Endothelial cell of umbilical vein (primary cell): ENCODE measurements at regions of chr18 and their contacts with region 1.

Region 1: DNA sequence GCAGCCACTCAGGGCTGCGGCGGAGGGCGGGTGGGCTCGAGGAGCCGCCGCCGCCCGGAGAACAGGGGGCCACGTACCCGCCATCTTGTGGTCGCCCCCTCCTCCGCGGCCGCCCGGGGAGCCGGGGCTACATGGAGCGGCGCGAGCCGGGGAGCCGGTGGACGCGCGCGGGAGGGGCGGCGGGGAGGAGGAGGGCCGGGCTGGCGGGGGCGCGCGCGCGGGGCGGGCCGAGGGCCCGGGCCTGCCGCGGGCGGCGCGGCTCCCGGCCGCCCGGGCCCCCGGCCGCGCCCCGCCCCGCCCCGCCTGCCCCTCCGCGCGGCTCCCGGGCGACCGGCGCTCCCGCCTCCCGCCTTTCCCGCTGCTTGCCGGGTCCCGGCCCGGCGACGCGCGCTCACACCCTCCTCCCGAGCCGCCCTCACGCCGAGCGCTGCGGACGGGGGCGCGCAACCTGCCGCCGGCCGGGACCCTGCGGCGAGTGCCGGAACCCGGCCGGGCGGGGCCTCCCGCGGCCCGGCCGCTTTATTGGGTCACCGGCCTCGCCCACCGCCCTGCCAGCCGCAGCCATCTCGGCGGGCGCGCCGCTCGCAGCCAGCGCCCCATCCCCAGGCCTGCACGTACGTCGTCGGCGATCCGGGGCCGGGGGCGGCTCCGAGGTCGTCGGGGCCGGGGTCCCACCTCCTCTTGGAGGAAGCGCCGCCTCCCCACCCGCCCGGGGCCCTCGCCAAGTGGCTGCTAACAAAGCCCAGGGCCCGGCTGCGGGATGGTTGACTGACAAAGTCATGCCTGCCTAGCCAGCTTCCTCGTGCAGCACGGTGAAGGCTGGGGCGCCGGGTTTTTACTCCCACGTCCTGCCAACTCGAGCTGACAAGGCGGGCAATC is at the start of gene PPP4R1:
- DNase-seq: peak; percentile 79
- H3K4me3 ChIP-seq: peak within 1 kb of the TSS; percentile 93 to 99 (median 98)
- H3K27ac ChIP-seq: peak within 1 kb of the TSS; percentile 86
- H3K4me1 ChIP-seq: peaks cover 51% of the 10 kb centered on the region
- H3K27me3 ChIP-seq: no peaks in the 10 kb centered on the region
- CTCF ChIP-seq: no peak
- POLR2A ChIP-seq: peak; percentile 59
- total RNA-seq, gene PPP4R1: 152 and 168 TPM in 2 replicates

Region 2: DNA sequence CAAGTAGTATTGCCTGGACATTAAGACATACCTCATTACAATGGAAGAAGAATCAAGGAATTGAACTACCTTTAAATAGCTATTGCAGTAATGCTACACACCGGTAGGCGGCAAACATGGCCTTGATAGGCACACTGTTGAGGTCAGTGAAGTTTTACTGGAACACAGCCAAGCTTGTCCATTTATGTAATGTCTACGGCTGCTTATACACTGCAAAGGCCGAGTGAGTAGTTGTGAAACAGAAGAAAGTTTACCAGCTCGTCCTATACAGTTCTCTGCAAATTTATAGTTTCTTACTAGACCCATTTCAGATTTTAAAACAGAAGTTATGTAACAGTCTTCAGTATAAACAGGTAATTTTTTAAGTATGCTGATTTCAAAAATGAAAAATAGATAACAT is 39.1 kb before region 1 on chr18:
- CTCF ChIA-PET with region 1: interaction called, 18 read pairs
- POLR2A ChIA-PET with region 1: no interaction called
- dilution Hi-C with region 1: no loop called
- intact Hi-C with region 1: loop called (anchors 1 kb)
- DNase-seq: peak; percentile 94
- H3K4me3 ChIP-seq: no peak overlapping the region
- H3K27ac ChIP-seq: no peak overlapping the region
- H3K4me1 ChIP-seq: peaks cover 28% of the 10 kb centered on the region
- H3K27me3 ChIP-seq: no peaks in the 10 kb centered on the region
- CTCF ChIP-seq: peak; percentile 80 to 84
- POLR2A ChIP-seq: no peak

Region 3: GRCh38 chr18:9661564-9661963 is 46.9 kb after region 1 on chr18:
- CTCF ChIA-PET with region 1: interaction called, 30 read pairs
- POLR2A ChIA-PET with region 1: no interaction called
- dilution Hi-C with region 1: no loop called
- intact Hi-C with region 1: no loop called
- DNase-seq: no peak
- H3K4me3 ChIP-seq: no peak overlapping the region
- H3K27ac ChIP-seq: no peak overlapping the region
- H3K4me1 ChIP-seq: no peaks in the 10 kb centered on the region
- H3K27me3 ChIP-seq: no peaks in the 10 kb centered on the region
- CTCF ChIP-seq: peak in 1 of 2 donors; percentile 9
- POLR2A ChIP-seq: no peak

Region 4: GRCh38 chr18:9690418-9691188 is 76.0 kb after region 1 on chr18:
- CTCF ChIA-PET with region 1: no interaction called
- POLR2A ChIA-PET with region 1: no interaction called
- dilution Hi-C with region 1: no loop called
- intact Hi-C with region 1: no loop called
- DNase-seq: no peak
- H3K4me3 ChIP-seq: no peak overlapping the region
- H3K27ac ChIP-seq: no peak overlapping the region
- H3K4me1 ChIP-seq: no peaks in the 10 kb centered on the region
- H3K27me3 ChIP-seq: no peaks in the 10 kb centered on the region
- CTCF ChIP-seq: no peak
- POLR2A ChIP-seq: no peak

Region 5: DNA sequence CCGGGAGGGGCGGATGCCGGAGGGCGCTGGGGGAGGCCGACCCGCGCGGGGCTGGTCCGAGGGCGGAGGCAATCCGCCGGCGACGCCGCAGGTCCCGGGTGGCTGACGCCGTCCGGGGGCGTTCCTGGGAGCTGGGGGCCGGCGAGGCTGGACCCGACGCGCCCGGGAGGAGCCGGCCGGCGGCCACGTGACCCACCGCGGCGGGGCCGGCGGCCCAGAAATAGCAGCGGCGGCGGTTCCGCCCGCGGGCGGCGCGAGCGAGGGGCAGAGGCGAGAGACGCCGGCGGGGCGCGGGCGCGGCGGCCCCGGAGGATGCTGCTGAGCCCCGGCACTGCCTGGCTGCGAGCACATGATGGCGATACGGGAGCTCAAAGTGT is 93.4 kb after region 1 on chr18 and contains the start of gene RAB31:
- CTCF ChIA-PET with region 1: interaction called, 11 read pairs
- POLR2A ChIA-PET with region 1: no interaction called
- dilution Hi-C with region 1: no loop called
- intact Hi-C with region 1: no loop called
- DNase-seq: peak; percentile 67
- H3K4me3 ChIP-seq: peak within 1 kb of the TSS; percentile 79 to 98 (median 91)
- H3K27ac ChIP-seq: peak within 1 kb of the TSS; percentile 70
- H3K4me1 ChIP-seq: peaks cover 23% of the 10 kb centered on the region
- H3K27me3 ChIP-seq: no peaks in the 10 kb centered on the region
- CTCF ChIP-seq: no peak
- POLR2A ChIP-seq: peak; percentile 52
- total RNA-seq, gene RAB31: 27.9 and 30.5 TPM in 2 replicates

Region 6: GRCh38 chr18:9771261-9771976 is 156.8 kb after region 1 on chr18:
- CTCF ChIA-PET with region 1: no interaction called
- POLR2A ChIA-PET with region 1: no interaction called
- dilution Hi-C with region 1: no loop called
- intact Hi-C with region 1: loop called (anchors 1 kb)
- DNase-seq: peak; percentile 81
- H3K4me3 ChIP-seq: no peak overlapping the region
- H3K27ac ChIP-seq: peak overlapping the region; percentile 14
- H3K4me1 ChIP-seq: peaks cover 4% of the 10 kb centered on the region
- H3K27me3 ChIP-seq: no peaks in the 10 kb centered on the region
- CTCF ChIP-seq: peak; percentile 97 to 99
- POLR2A ChIP-seq: no peak

Region 7: DNA sequence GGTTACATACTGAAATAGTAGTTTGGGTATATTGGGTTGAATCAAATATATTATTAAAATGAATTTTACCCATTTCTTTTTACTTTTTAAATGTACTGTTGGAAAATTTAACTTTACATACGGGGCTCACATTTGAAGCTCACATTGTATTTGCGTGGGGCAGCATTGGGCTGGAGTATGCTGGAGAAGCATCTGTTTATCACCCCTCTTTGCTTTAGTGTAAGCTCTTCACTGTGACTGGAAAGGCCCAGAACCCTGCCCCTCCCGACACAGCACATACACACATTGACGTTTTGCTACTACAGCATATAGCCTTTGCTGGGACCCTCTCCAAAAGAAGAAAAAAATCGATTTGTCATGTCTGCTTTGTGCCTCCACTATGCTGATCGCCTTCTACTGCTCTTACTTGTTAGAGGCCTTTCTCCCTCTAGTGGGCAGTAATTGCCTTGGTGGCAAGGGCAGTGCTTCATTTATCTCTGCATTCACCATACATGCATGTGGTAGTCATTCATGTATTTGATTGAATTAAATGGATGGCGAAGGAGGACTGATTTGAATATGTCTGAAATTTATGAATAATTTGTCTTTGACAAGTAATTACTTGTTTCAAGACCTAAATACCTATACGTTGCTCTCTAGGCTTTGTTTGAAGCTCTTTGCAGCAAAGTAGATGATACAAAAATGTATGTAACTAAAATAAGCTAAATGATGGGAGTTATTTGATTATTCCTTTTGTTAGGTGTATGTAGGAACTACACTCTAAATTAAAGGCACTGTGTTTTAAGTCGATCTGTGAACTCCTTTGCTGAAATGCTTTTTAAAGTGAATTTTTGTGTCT is 336.6 kb after region 1 on chr18:
- CTCF ChIA-PET with region 1: interaction called, 6 read pairs
- POLR2A ChIA-PET with region 1: no interaction called
- dilution Hi-C with region 1: no loop called
- intact Hi-C with region 1: loop called (anchors 2 kb)
- DNase-seq: peak; percentile 75
- H3K4me3 ChIP-seq: no peak overlapping the region
- H3K27ac ChIP-seq: no peak overlapping the region
- H3K4me1 ChIP-seq: no peaks in the 10 kb centered on the region
- H3K27me3 ChIP-seq: no peaks in the 10 kb centered on the region
- CTCF ChIP-seq: peak; percentile 63 to 68
- POLR2A ChIP-seq: no peak